ENCODE measurements at regions of chr11 and their contacts with region 1.

Region 1: DNA sequence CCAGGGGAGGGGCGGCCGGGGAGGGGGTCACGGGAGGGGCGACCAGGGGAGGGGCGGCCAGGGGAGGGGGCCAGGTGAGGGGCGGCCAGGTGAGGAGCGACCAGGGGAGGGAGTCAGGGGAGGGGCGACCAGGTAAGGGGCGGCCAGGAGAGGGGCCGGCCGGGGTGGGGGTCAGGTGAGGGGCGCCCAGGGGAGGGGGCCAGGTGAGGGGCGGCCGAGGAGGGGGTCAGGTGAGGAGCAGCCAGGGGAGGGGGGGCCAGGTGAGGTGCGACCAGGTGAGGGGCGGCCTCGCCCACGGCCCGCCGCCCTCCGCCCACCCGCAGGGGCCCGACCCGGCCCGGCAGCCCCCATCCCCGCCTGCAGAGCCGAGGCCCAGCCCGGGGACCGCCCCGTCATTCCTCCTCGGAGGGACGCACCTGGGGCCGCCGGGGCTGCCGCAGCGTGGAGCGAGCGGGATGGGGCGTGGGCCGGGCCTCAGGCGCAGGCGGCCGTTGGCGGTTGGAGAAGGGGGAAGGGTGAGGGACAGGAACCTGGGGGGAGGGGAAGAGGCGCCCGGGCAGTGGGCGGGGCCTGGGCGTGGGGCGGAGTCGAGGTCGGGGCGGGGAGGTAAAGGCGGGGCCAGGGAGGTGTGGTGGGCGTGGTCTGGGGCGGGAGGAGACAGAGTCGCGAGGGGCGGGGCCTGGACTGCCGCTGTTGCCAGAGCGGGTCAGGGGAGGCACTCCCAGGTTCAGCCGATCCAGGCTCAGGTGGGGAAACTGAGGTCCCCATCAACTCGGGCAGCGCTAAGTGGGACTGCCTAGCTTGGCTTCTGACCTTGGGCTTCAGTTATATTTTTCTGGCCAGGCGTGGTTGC is at the start of gene TESMIN:
- DNase-seq: peak; percentile 58
- H3K4me3 ChIP-seq: peak within 1 kb of the TSS in 2 of 3 experiments; percentile 22 to 46
- H3K27ac ChIP-seq: no peak within 1 kb of the TSS
- H3K4me1 ChIP-seq: peaks cover 21% of the 10 kb centered on the region
- H3K27me3 ChIP-seq: no peaks in the 10 kb centered on the region
- CTCF ChIP-seq: no peak
- POLR2A ChIP-seq: no peak
- total RNA-seq, gene TESMIN: 3.1 and 6.1 TPM in 2 replicates

Region 2: GRCh38 chr11:68677432-68677831 is 73.8 kb before region 1 on chr11:
- CTCF ChIA-PET with region 1: interaction called, 4 read pairs
- POLR2A ChIA-PET with region 1: interaction called, 6 read pairs
- dilution Hi-C with region 1: no loop called
- intact Hi-C with region 1: loop called (anchors 1 kb)
- DNase-seq: peak; percentile 87
- H3K4me3 ChIP-seq: no peak overlapping the region
- H3K27ac ChIP-seq: no peak overlapping the region
- H3K4me1 ChIP-seq: peaks cover 7% of the 10 kb centered on the region
- H3K27me3 ChIP-seq: no peaks in the 10 kb centered on the region
- CTCF ChIP-seq: no peak
- POLR2A ChIP-seq: no peak